Esophagus muscularis mucosa (tissue), 4 donors: ENCODE measurements at regions of chr14 and their contacts with region 1.

Region 1: GRCh38 chr14:103576371-103577024 is 13.7 kb downstream of the COA8 start:
- DNase-seq: peak; percentile 95
- H3K4me3 ChIP-seq: peak overlapping the region in 1 of 4 donors; percentile 6
- H3K27ac ChIP-seq: peak overlapping the region; percentile 72 to 85 (median 78)
- H3K4me1 ChIP-seq: peaks cover 38 to 52% (median 42%) of the 10 kb centered on the region in 4 donors
- H3K27me3 ChIP-seq: no peaks in the 10 kb centered on the region
- CTCF ChIP-seq: peak in 1 of 3 experiments; percentile 8
- EP300 ChIP-seq: no peak
- POLR2A ChIP-seq: no peak

Region 2: GRCh38 chr14:103333754-103334643 is 242.5 kb before region 1 on chr14 and contains the start of gene EIF5:
- intact Hi-C with region 1: no loop called
- DNase-seq: peak; percentile 100
- H3K4me3 ChIP-seq: peak within 1 kb of the TSS; percentile 72 to 100 (median 94)
- H3K27ac ChIP-seq: peak within 1 kb of the TSS; percentile 96 to 100 (median 100)
- H3K4me1 ChIP-seq: peaks cover 31 to 44% (median 41%) of the 10 kb centered on the region in 4 donors
- H3K27me3 ChIP-seq: no peaks in the 10 kb centered on the region
- CTCF ChIP-seq: peak; percentile 22 to 44 (median 41)
- EP300 ChIP-seq: no peak
- POLR2A ChIP-seq: peak; percentile 92
- total RNA-seq, gene EIF5: 118 to 237 (median 159) TPM

Region 3: GRCh38 chr14:103628684-103629502 is 52.4 kb after region 1 on chr14 and contains the start of gene KLC1:
- intact Hi-C with region 1: loop called (anchors 5 kb)
- DNase-seq: peak; percentile 94
- H3K4me3 ChIP-seq: peak within 1 kb of the TSS; percentile 82 to 98 (median 96)
- H3K27ac ChIP-seq: peak within 1 kb of the TSS; percentile 95 to 100 (median 99)
- H3K4me1 ChIP-seq: peaks cover 60 to 71% (median 70%) of the 10 kb centered on the region in 4 donors
- H3K27me3 ChIP-seq: no peaks in the 10 kb centered on the region
- CTCF ChIP-seq: no peak
- EP300 ChIP-seq: no peak
- POLR2A ChIP-seq: peak; percentile 93
- total RNA-seq, gene KLC1: 285 to 343 (median 312) TPM

Region 4: DNA sequence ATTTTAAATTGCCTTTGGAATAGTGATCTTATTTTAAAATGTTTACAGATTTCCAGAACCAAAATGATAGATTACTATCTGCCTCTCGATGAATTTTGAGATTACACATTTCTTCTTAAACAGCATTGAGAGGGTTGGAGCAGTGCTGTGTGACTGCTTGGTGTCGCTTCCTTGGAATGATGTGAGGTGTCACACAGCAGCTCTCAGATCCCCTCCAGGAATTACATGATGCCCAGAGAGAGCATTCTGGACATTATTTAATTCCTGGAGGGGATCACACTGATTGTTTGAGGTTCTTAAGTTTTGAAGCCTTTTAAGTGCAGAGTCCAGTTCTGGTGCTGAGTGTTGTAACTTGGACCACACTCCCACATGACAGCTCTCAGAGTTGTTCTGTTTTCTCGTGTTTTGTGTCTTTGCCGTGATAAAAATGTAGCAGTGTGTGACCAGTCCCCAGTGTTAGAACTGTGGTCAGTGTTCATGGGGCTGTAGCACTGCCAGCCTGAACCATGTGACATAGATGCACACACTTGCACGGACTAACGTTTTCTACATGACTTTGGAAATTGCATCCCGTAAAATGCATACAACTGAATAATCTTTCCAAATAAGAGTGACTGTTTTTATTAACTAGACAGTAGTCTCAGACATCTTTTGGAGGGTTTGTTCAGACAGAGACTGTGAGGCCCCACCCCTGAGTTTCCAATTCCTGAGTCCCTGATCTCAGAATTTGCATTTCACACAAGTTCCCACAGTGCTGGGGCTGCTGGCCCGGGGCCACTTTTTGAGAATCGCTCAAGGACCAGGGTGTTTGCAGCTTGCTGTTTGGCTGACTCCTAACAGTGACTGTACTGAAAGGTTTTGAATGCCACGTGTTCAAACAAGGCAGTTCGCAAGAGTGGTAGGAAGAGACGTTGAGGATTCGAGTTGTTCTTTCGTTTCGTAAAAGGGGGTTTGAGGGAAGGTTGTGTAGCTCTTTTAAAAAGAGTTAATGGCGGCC is 112.7 kb after region 1 on chr14:
- intact Hi-C with region 1: loop called (anchors 10 kb)
- DNase-seq: no peak
- H3K4me3 ChIP-seq: no peak overlapping the region
- H3K27ac ChIP-seq: peak overlapping the region in 1 of 4 donors; percentile 28
- H3K4me1 ChIP-seq: peaks cover 15 to 44% (median 34%) of the 10 kb centered on the region in 4 donors
- H3K27me3 ChIP-seq: no peaks in the 10 kb centered on the region
- CTCF ChIP-seq: no peak
- EP300 ChIP-seq: no peak
- POLR2A ChIP-seq: no peak

Region 5: GRCh38 chr14:103910262-103910935 is 333.9 kb after region 1 on chr14:
- intact Hi-C with region 1: loop called (anchors 10 kb)
- DNase-seq: no peak
- H3K4me3 ChIP-seq: peak overlapping the region in 3 of 4 donors; percentile 9 to 33 (median 33)
- H3K27ac ChIP-seq: peak overlapping the region; percentile 36 to 67 (median 52)
- H3K4me1 ChIP-seq: peaks cover 12 to 18% (median 14%) of the 10 kb centered on the region in 4 donors
- H3K27me3 ChIP-seq: no peaks in the 10 kb centered on the region
- CTCF ChIP-seq: peak; percentile 74 to 88 (median 80)
- EP300 ChIP-seq: no peak
- POLR2A ChIP-seq: no peak